GM12878 (cell line): ENCODE measurements at regions of chr1 and their contacts with region 1.

Region 1: DNA sequence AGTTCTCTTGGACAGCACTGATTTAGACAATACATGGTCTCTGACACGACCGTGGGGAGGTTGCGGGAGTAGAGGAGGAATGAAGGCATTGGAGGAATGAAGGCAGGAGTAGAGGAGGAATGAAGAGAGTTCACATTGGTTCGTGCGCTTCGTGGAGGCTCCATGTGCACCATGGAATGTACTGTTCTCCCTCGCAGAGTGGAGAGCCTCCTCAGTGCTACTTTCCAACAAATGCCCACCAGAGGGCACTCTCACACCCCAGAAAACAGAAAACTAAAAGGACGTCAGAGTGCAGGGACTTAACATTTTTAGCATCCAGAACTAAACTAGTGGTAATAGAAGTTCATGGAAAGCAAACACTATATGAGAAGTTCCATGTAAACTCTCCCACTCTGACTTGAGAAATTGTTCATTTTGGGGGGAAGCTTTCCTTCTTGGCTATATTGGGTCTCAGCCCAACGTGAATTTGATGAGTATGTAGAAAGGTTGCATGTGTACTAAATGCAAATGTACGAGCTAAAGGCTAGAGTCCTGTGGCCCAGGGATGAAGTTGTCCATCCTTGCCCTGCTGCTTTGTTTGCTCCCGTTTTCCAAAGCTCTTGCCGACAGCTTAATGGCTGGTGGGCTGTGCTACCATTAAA is 211.6 kb downstream of the LMX1A start:
- DNase-seq: no peak
- ATAC-seq: peak; percentile 94
- H3K4me3 ChIP-seq: no peak overlapping the region
- H3K27ac ChIP-seq: no peak overlapping the region
- H3K4me1 ChIP-seq: no peaks in the 10 kb centered on the region
- H3K27me3 ChIP-seq: no peaks in the 10 kb centered on the region; a peak in 1 of 4 replicates
- CTCF ChIP-seq: peak; percentile 73 to 82 (median 81)
- EP300 ChIP-seq: no peak
- POLR2A ChIP-seq: no peak
- RAD21 ChIP-seq: peak; percentile 49

Region 2: DNA sequence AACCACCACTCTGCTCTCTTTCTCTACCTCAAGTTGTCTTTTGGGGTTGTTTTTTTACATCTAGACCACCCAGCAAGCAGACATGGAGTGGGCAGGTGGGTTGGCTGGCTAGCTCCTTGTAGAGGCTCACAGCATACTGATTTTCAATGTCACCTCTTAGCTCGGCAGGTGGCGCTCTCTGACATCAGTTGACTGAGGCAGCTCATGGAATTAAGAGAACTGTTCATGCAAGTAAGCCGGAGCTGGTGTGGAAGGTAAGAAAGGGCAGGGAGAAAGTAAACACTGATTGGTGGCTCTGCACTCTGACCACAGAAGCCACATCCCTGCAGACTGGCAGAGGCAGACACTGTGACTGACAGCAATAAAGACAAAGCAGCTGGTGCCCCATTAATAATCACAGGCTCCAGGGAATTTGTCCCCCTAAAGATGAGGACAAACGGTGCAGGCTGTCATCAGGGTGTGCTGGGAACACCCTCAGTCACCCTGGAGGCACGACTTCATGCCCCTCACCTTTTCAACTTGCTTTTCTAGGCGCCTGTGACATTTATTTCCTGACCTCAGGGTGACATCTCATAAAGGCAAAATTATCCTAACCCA is 15.2 kb before region 1 on chr1:
- CTCF ChIA-PET with region 1: interaction called, 27 read pairs
- POLR2A ChIA-PET with region 1: no interaction called
- RAD21 ChIA-PET with region 1: no interaction called
- SMC1A ChIA-PET with region 1: interaction called, 4 read pairs
- in situ Hi-C with region 1: no loop called
- intact Hi-C with region 1: no loop called
- DNase-seq: no peak
- ATAC-seq: peak; percentile 89
- H3K4me3 ChIP-seq: no peak overlapping the region
- H3K27ac ChIP-seq: no peak overlapping the region
- H3K4me1 ChIP-seq: no peaks in the 10 kb centered on the region
- H3K27me3 ChIP-seq: no peaks in the 10 kb centered on the region; a peak in 1 of 4 replicates
- CTCF ChIP-seq: peak; percentile 65 to 69 (median 68)
- EP300 ChIP-seq: no peak
- POLR2A ChIP-seq: no peak
- RAD21 ChIP-seq: peak; percentile 40

Region 3: GRCh38 chr1:165189913-165190312 is 45.0 kb after region 1 on chr1:
- CTCF ChIA-PET with region 1: no interaction called
- POLR2A ChIA-PET with region 1: no interaction called
- RAD21 ChIA-PET with region 1: no interaction called
- SMC1A ChIA-PET with region 1: no interaction called
- in situ Hi-C with region 1: no loop called
- intact Hi-C with region 1: no loop called
- DNase-seq: no peak
- ATAC-seq: no peak
- H3K4me3 ChIP-seq: no peak overlapping the region
- H3K27ac ChIP-seq: no peak overlapping the region
- H3K4me1 ChIP-seq: no peaks in the 10 kb centered on the region
- H3K27me3 ChIP-seq: no peaks in the 10 kb centered on the region
- CTCF ChIP-seq: no peak
- EP300 ChIP-seq: no peak
- POLR2A ChIP-seq: no peak
- RAD21 ChIP-seq: no peak